Activated CD8-positive, alpha-beta T cell treated with anti-CD3 and anti-CD28 coated beads for 36 hours (primary cell): ENCODE measurements at regions of chr6 and their contacts with region 1.

Region 1: DNA sequence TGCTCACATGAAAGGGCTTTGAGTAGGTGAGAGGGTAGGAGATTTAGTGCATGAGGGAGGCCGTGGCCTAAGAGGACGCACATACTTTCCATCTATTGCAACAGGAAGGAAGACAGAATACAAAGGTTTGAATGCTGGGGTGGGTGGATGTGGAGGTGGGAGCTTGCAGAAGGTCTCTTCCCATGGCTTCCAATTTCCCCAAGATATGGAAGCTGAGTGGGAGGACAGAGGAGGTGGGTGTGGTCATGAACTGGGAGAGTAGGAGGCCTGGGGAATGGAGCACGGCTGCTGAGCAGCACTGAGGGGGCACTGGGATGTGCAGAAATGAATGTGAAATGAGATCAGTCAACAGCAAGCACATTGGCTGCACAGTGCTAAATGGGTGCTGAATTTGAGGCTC is 70.3 kb downstream of the SCML4 start:
- DNase-seq: no peak
- ATAC-seq: peak; percentile 70
- H3K4me3 Mint-ChIP-seq: peak overlapping the region; percentile 31
- H3K27ac Mint-ChIP-seq: peak overlapping the region; percentile 90
- H3K4me1 Mint-ChIP-seq: peaks cover 69% of the 10 kb centered on the region
- H3K27me3 Mint-ChIP-seq: no peaks in the 10 kb centered on the region
- CTCF ChIP-seq: no peak

Region 2: DNA sequence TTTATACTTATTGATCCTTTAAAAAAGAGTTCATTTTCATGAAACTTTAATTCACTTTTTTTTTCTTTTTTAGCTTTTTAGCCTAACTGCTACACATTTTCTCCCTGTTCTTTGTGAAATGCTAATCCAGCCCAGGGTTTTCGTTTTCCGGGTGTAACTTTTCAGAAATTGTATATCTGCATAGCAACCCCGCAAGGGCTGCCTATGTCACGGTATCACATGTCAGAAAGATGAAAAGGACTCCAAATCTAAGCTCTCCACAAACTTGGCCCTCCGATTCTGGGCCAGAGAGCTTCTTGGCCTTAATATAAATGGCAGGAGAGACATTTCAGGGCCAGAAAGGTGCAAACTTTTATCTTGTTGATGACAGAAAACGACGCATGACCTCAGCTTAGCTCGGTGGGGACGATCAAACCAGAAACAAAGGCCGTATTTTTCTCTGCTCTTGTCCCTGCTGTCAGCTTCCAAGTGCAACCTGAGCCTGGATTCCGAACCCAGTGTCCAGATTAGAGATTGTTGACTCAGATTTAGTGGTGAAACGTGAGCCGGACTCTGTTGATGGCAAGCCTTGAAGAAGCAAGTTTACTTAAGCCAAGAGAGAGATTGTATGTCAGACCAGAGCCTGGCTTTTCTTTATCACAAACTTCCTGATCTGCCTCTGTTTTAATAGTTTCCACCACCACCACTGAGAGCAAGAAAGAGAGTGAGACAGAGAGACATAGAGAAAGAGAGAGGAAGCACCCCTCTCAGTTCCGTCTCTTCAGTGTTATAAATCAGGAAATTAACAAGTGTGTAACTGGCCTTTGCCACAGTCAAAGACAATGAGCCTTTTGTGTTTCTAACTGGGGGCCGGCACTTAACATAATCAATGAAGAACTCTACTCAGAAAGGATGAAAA is 87.4 kb before region 1 on chr6:
- CTCF ChIA-PET with region 1: no interaction called
- POLR2A ChIA-PET with region 1: no interaction called
- intact Hi-C with region 1: no loop called
- DNase-seq: no peak
- ATAC-seq: no peak
- H3K4me3 Mint-ChIP-seq: no peak overlapping the region
- H3K27ac Mint-ChIP-seq: no peak overlapping the region
- H3K4me1 Mint-ChIP-seq: peaks cover 18% of the 10 kb centered on the region
- H3K27me3 Mint-ChIP-seq: no peaks in the 10 kb centered on the region
- CTCF ChIP-seq: no peak

Region 3: DNA sequence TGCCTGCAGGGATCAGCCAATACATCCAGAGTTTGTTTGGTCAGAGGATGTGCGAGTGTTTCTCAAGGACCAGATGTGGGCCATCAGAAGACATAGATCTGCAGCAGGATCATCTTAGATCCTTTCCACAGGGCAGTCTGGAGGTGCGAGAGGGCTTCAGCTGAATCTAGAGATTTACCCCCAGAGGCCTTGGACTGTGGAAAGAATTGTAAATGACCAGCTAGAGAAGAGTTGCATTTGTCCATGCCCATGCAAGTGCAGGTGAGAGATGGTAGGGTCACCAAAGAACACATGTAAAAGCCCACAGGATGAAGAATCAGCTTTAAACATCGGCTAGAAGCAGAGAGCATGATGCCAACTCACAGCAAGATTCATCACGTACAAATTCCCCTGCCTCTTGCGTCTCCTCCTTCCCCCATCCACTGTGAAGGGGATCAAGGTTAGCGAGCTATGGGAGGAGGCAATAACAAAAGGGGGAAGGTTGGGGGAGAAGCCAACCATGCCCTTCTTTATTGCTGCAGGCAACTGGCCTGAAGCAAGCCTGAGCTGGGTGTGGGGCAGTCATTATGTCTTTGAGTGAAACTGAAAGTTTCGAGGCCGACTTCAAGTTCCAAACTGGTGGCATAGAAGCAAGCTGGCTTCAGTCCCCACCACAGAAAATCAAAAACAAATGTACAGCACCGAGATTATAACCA is 13.1 kb before region 1 on chr6:
- CTCF ChIA-PET with region 1: interaction called, 7 read pairs
- POLR2A ChIA-PET with region 1: interaction called, 16 read pairs
- intact Hi-C with region 1: no loop called
- DNase-seq: peak; percentile 61
- ATAC-seq: peak; percentile 66
- H3K4me3 Mint-ChIP-seq: peak overlapping the region; percentile 75
- H3K27ac Mint-ChIP-seq: peak overlapping the region; percentile 92
- H3K4me1 Mint-ChIP-seq: peaks cover 60% of the 10 kb centered on the region
- H3K27me3 Mint-ChIP-seq: no peaks in the 10 kb centered on the region
- CTCF ChIP-seq: no peak

Region 4: DNA sequence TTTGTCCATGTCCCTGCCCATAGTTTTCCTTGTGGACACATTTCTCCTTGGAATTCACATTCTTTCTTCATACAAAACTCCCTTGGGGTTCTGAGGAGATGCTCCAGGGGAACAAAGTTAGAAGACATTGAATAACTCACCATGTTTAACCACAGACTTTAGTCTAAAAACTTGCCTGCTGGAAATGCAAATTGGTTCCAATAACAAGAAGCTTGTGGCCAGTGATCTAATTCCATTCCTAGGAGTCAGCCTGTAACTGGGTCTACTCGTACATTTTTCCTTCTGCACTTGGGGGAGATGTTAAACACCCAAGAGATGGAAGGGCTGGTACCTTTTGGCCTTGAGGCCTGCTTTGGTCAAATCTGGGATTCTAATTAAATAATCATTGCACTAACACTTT is 10.2 kb after region 1 on chr6:
- CTCF ChIA-PET with region 1: interaction called, 4 read pairs
- POLR2A ChIA-PET with region 1: interaction called, 11 read pairs
- intact Hi-C with region 1: no loop called
- DNase-seq: no peak
- ATAC-seq: no peak
- H3K4me3 Mint-ChIP-seq: no peak overlapping the region
- H3K27ac Mint-ChIP-seq: no peak overlapping the region
- H3K4me1 Mint-ChIP-seq: peaks cover 22% of the 10 kb centered on the region
- H3K27me3 Mint-ChIP-seq: no peaks in the 10 kb centered on the region
- CTCF ChIP-seq: no peak